A673 (cell line): ENCODE measurements at regions of chr13 and their contacts with region 1.

Region 1: GRCh38 chr13:79423801-79424642 is 18.0 kb upstream of the RBM26 start:
- DNase-seq: peak; percentile 65
- H3K4me3 ChIP-seq: no peak overlapping the region
- H3K27ac ChIP-seq: no peak overlapping the region
- H3K4me1 ChIP-seq: no peaks in the 10 kb centered on the region
- H3K27me3 ChIP-seq: no peaks in the 10 kb centered on the region
- CTCF ChIP-seq: peak; percentile 71

Region 2: GRCh38 chr13:78862446-78862845 is 561.6 kb before region 1 on chr13:
- CTCF ChIA-PET with region 1: no interaction called
- POLR2A ChIA-PET with region 1: no interaction called
- intact Hi-C with region 1: no loop called
- DNase-seq: no peak
- H3K4me3 ChIP-seq: no peak overlapping the region
- H3K27ac ChIP-seq: no peak overlapping the region
- H3K4me1 ChIP-seq: no peaks in the 10 kb centered on the region
- H3K27me3 ChIP-seq: no peaks in the 10 kb centered on the region
- CTCF ChIP-seq: no peak

Region 3: GRCh38 chr13:79090552-79091124 is 333.4 kb before region 1 on chr13:
- CTCF ChIA-PET with region 1: no interaction called
- POLR2A ChIA-PET with region 1: no interaction called
- intact Hi-C with region 1: no loop called
- DNase-seq: no peak
- H3K4me3 ChIP-seq: no peak overlapping the region
- H3K27ac ChIP-seq: no peak overlapping the region
- H3K4me1 ChIP-seq: no peaks in the 10 kb centered on the region
- H3K27me3 ChIP-seq: no peaks in the 10 kb centered on the region
- CTCF ChIP-seq: no peak

Region 4: DNA sequence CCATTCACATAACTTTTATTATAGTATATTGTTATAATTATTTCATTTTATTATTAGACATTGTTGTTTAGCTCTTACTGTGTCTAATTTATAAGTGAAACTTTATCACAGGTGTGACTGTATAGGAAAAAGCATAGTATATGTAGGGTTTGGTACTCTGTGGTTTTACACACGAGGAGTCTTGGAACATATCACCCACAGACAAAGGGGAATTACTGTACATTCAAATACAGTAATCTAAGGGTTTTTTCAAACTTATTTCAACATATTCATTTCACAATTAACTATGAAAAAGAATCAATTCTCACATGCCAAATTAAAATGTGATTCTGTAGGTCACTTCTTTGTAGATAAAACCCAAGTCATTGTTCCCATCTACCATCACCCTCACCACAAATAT is 63.9 kb before region 1 on chr13:
- CTCF ChIA-PET with region 1: interaction called, 13 read pairs
- POLR2A ChIA-PET with region 1: interaction called, 7 read pairs
- intact Hi-C with region 1: no loop called
- DNase-seq: no peak
- H3K4me3 ChIP-seq: no peak overlapping the region
- H3K27ac ChIP-seq: no peak overlapping the region
- H3K4me1 ChIP-seq: peaks cover 11% of the 10 kb centered on the region
- H3K27me3 ChIP-seq: no peaks in the 10 kb centered on the region
- CTCF ChIP-seq: no peak

Region 5: GRCh38 chr13:79373916-79374315 is 50.1 kb before region 1 on chr13:
- CTCF ChIA-PET with region 1: no interaction called
- POLR2A ChIA-PET with region 1: no interaction called
- intact Hi-C with region 1: no loop called
- DNase-seq: no peak
- H3K4me3 ChIP-seq: no peak overlapping the region
- H3K27ac ChIP-seq: no peak overlapping the region
- H3K4me1 ChIP-seq: no peaks in the 10 kb centered on the region
- H3K27me3 ChIP-seq: no peaks in the 10 kb centered on the region
- CTCF ChIP-seq: no peak

Region 6: DNA sequence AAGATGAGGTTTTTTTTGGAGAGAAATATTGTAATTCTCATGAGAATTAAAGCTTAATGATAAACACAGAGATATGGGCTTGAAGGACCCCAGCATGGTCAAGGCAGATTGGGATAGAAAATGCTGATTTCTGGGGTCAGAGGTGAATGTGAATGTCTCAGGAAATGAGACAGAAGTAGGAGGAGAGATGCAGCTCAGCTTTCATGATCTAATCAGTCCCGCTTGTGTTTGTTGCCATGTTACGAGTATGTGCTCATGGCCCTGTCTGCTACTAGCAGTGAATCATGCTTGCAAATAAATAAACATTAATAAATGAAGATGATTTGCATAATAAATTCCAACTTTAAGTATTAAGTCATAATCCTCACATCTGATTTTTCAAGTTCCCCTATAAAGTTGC is 33.9 kb after region 1 on chr13:
- CTCF ChIA-PET with region 1: no interaction called
- POLR2A ChIA-PET with region 1: no interaction called
- intact Hi-C with region 1: no loop called
- DNase-seq: no peak
- H3K4me3 ChIP-seq: no peak overlapping the region
- H3K27ac ChIP-seq: no peak overlapping the region
- H3K4me1 ChIP-seq: no peaks in the 10 kb centered on the region
- H3K27me3 ChIP-seq: peaks cover 5% of the 10 kb centered on the region
- CTCF ChIP-seq: no peak

Region 7: DNA sequence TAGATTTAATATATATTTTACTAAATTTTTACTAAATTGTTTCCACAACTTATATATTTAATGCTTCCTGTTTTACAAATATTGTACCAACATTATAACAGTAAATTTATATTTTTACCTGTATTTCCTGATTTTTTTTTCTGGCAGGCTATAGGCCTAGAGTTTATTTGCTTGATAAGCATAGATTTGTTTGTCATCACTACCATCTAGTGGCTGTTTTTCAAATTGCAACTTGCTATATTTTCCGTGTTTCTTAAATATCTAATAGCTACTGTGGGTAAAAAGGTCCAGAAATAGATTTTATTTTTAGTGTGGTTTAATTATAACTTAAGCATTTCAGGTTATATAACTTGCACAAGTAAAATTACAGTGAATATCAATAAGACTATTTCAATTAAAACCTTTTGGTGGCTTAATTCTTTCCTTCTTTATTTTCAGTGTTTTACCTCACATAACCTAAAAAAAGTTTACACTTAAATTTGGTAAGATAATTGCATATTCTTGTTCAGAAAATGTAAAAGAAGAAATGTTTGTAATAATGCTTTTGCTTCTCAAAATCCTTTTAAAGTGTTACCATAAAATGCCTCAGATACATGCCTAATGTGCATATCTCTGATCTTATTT is 117.5 kb after region 1 on chr13:
- CTCF ChIA-PET with region 1: interaction called, 33 read pairs
- POLR2A ChIA-PET with region 1: no interaction called
- intact Hi-C with region 1: loop called (anchors 2 kb)
- DNase-seq: peak; percentile 73
- H3K4me3 ChIP-seq: no peak overlapping the region
- H3K27ac ChIP-seq: no peak overlapping the region
- H3K4me1 ChIP-seq: no peaks in the 10 kb centered on the region
- H3K27me3 ChIP-seq: no peaks in the 10 kb centered on the region
- CTCF ChIP-seq: peak; percentile 80